IMR-90 (cell line): ENCODE measurements at regions of chr2 and their contacts with region 1.

Region 1: GRCh38 chr2:19369341-19369955 is 11.0 kb upstream of the OSR1 start:
- DNase-seq: peak; percentile 50
- ATAC-seq: peak; percentile 74
- H3K4me3 ChIP-seq: no peak overlapping the region
- H3K27ac ChIP-seq: no peak overlapping the region
- H3K4me1 ChIP-seq: no peaks in the 10 kb centered on the region
- H3K27me3 ChIP-seq: peaks cover 33% of the 10 kb centered on the region
- CTCF ChIP-seq: peak; percentile 51
- POLR2A ChIP-seq: no peak
- RAD21 ChIP-seq: peak; percentile 61

Region 2: GRCh38 chr2:19667085-19667484 is 297.6 kb after region 1 on chr2:
- CTCF ChIA-PET with region 1: interaction called, 3 read pairs
- POLR2A ChIA-PET with region 1: no interaction called
- dilution Hi-C with region 1: no loop called
- in situ Hi-C with region 1: loop called (anchors 10 kb)
- intact Hi-C with region 1: loop called (anchors 2 kb)
- DNase-seq: peak; percentile 59
- ATAC-seq: peak; percentile 51
- H3K4me3 ChIP-seq: no peak overlapping the region
- H3K27ac ChIP-seq: no peak overlapping the region
- H3K4me1 ChIP-seq: no peaks in the 10 kb centered on the region; the same call in 1 of the 2 replicates
- H3K27me3 ChIP-seq: peaks cover 4% of the 10 kb centered on the region
- CTCF ChIP-seq: peak; percentile 47
- POLR2A ChIP-seq: no peak
- RAD21 ChIP-seq: peak; percentile 58

Region 3: DNA sequence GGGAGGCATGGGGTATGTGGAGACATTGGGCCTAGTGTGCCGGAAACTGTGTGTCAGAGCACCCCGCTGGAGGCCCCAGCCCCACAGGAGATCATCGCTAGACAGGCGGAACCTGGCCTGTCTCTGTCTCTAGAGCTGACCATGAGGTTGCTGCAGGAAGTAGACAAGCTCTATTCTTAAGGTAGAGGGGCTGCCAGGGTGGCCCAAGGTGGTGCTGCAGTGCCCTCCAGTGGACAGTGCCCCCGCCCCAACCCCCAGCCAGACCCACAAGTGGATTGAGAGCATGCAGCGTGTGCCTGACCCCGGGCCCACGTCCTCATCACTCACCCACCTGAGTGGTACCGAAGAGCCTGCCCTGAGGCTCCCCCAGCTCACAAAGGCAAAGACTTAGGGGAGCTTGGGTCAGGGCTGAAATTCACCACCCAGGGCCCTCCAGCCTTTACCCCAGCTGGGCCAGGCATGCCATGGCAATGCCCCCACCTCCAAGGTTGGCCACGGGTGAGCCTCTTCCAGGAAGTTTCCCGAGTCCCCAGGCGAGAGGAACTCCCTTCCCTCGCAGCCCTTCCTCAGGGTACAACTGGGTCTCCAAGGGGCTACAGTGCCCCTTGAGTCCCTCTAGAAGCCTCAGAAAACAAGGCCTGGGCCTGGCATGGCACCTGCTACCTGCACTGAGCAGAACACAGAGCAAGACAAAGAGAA is 377.3 kb after region 1 on chr2:
- CTCF ChIA-PET with region 1: no interaction called
- POLR2A ChIA-PET with region 1: no interaction called
- dilution Hi-C with region 1: no loop called
- in situ Hi-C with region 1: no loop called
- intact Hi-C with region 1: loop called (anchors 5 kb)
- DNase-seq: peak; percentile 25
- ATAC-seq: peak; percentile 55
- H3K4me3 ChIP-seq: no peak overlapping the region
- H3K27ac ChIP-seq: no peak overlapping the region
- H3K4me1 ChIP-seq: peaks cover 7% of the 10 kb centered on the region
- H3K27me3 ChIP-seq: no peaks in the 10 kb centered on the region
- CTCF ChIP-seq: peak; percentile 50
- POLR2A ChIP-seq: no peak
- RAD21 ChIP-seq: peak; percentile 65